Activated T-helper 1 cell treated with anti-CD3 and anti-CD28 coated beads, Interleukin-12 subunit alpha, Interleukin-12 subunit beta, Interleukin-2, Interleukin-4 antibody, amounts not matched to agents 30 ng/mL and 10 ng/mL and 1 ng/mL, durations not matched to agents 14 hours and 24 hours and 36 hours (primary cell): ENCODE measurements at regions of chr2 and their contacts with region 1.

Region 1: GRCh38 chr2:38653715-38654527 is 12.0 kb upstream of the GALM start:
- DNase-seq: peak; percentile 30
- H3K4me3 Mint-ChIP-seq: peak overlapping the region; percentile 68
- H3K27ac Mint-ChIP-seq: peak overlapping the region; percentile 90
- H3K4me1 Mint-ChIP-seq: peaks cover 80% of the 10 kb centered on the region
- H3K27me3 Mint-ChIP-seq: no peaks in the 10 kb centered on the region

Region 2: DNA sequence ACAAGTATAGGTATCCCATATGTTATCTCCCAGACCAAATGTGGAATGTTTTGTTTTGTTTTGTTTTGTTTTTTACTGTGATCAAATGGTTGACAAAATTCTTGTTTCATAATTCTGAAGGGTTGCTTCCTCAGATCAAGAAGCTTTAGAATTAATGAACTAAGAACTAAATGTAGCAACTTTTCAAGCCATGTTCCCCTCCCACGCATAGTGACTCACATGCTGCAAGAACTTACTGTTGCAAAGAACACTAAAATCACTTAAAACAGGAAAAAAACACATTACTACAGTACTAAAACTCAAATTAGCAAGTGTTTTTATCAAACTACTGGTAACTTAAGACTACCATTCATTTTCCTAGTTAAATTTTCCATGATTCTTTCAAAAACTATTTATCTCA is 81.8 kb before region 1 on chr2:
- intact Hi-C with region 1: no loop called
- DNase-seq: no peak
- H3K4me3 Mint-ChIP-seq: peak overlapping the region; percentile 1
- H3K27ac Mint-ChIP-seq: peak overlapping the region; percentile 70
- H3K4me1 Mint-ChIP-seq: peaks cover 62% of the 10 kb centered on the region
- H3K27me3 Mint-ChIP-seq: no peaks in the 10 kb centered on the region

Region 3: GRCh38 chr2:38619458-38620164 is 34.3 kb before region 1 on chr2:
- intact Hi-C with region 1: loop called (anchors 1 kb)
- DNase-seq: no peak
- H3K4me3 Mint-ChIP-seq: no peak overlapping the region
- H3K27ac Mint-ChIP-seq: no peak overlapping the region
- H3K4me1 Mint-ChIP-seq: peaks cover 31% of the 10 kb centered on the region
- H3K27me3 Mint-ChIP-seq: peaks cover 2% of the 10 kb centered on the region

Region 4: DNA sequence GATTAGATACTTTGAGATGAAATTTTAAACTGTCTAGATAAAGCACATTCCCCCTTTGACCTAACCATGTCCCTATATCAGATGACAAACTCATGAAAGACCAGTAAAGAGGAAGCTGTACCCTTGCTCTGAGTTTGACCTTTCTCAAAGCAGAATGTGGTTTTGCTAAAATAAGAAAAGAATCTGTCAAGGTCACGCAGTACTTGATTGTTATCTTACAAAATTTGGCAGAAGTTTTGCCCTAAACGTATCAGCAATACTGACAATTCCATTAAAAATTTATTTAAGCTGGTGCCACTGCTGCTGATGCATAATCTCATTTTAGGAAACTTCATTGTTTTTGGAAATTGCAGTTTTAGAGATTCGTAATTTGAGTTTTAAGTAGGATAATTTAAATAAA is 19.2 kb before region 1 on chr2:
- intact Hi-C with region 1: loop called (anchors 2 kb)
- DNase-seq: no peak
- H3K4me3 Mint-ChIP-seq: no peak overlapping the region
- H3K27ac Mint-ChIP-seq: peak overlapping the region; percentile 29
- H3K4me1 Mint-ChIP-seq: peaks cover 44% of the 10 kb centered on the region
- H3K27me3 Mint-ChIP-seq: no peaks in the 10 kb centered on the region

Region 5: GRCh38 chr2:38690499-38691294 is 36.8 kb after region 1 on chr2:
- intact Hi-C with region 1: no loop called
- DNase-seq: no peak
- H3K4me3 Mint-ChIP-seq: no peak overlapping the region
- H3K27ac Mint-ChIP-seq: peak overlapping the region; percentile 89
- H3K4me1 Mint-ChIP-seq: peaks cover 49% of the 10 kb centered on the region
- H3K27me3 Mint-ChIP-seq: no peaks in the 10 kb centered on the region

Region 6: GRCh38 chr2:38709567-38710194 is 55.8 kb after region 1 on chr2:
- intact Hi-C with region 1: loop called (anchors 1 kb)
- DNase-seq: peak; percentile 29
- H3K4me3 Mint-ChIP-seq: peak overlapping the region; percentile 66
- H3K27ac Mint-ChIP-seq: peak overlapping the region; percentile 95
- H3K4me1 Mint-ChIP-seq: peaks cover 77% of the 10 kb centered on the region
- H3K27me3 Mint-ChIP-seq: no peaks in the 10 kb centered on the region

Region 7: DNA sequence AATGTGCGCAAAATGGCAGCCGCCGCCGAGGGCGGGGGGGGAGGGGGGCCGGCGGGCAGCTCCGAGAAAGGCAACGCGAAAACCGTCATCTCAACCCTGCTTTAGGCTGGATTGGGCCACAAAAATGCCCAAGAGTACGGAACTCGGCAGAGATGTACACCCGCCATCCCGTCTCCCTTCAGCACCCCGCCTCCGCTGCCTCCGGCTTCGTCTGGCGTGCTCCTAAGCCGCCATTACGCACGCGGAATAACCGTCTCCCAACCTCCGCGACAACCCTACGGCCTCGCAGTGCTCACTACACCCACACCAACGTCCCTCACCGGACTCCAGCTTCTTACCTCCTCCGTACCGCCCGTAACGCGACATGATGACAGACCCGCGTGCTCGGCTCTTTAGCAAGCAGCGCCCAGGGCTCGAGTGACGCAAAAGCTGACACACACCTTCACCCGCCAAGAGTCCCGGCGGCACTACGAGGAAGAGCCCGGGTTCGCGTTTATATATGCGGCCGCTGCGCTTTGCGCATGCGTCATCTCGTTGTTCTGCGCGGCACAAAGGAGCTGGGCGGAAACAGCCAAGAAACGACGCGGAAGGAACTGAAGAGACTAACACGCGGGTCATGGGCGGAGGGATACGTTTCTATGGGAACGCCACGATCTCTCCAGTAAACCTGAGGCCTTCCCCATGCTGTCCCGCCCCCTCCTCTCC is 97.1 kb after region 1 on chr2 and contains the start of gene SRSF7:
- intact Hi-C with region 1: loop called (anchors 1 kb)
- DNase-seq: peak; percentile 96
- H3K4me3 Mint-ChIP-seq: peak within 1 kb of the TSS; percentile 98
- H3K27ac Mint-ChIP-seq: peak within 1 kb of the TSS; percentile 100
- H3K4me1 Mint-ChIP-seq: peaks cover 54% of the 10 kb centered on the region
- H3K27me3 Mint-ChIP-seq: no peaks in the 10 kb centered on the region
- total RNA-seq, gene SRSF7: 417 and 422 TPM in 2 replicates

Region 8: DNA sequence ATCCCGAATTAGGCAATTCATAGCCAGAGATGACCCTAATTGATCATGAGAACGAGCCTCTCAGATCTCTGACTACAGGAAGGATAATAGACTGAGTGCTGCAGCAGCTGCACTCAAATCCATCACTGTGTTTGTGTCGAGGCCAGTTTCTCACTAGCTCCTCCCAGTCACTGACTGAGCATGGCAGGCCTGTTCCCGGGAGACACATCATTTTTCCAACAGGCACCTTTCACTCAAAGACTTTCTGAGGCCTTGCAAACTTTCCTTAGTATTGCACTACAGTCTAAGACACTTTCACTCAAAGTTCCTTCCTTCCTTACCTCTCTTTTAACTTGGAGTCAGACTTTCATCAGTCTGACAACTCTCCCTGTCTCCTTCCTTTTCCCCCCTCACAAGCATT is 453.2 kb after region 1 on chr2:
- intact Hi-C with region 1: no loop called
- DNase-seq: no peak
- H3K4me3 Mint-ChIP-seq: no peak overlapping the region
- H3K27ac Mint-ChIP-seq: peak overlapping the region; percentile 84
- H3K4me1 Mint-ChIP-seq: peaks cover 65% of the 10 kb centered on the region
- H3K27me3 Mint-ChIP-seq: no peaks in the 10 kb centered on the region